ENCODE measurements at regions of chr3 and their contacts with region 1.

Region 1: DNA sequence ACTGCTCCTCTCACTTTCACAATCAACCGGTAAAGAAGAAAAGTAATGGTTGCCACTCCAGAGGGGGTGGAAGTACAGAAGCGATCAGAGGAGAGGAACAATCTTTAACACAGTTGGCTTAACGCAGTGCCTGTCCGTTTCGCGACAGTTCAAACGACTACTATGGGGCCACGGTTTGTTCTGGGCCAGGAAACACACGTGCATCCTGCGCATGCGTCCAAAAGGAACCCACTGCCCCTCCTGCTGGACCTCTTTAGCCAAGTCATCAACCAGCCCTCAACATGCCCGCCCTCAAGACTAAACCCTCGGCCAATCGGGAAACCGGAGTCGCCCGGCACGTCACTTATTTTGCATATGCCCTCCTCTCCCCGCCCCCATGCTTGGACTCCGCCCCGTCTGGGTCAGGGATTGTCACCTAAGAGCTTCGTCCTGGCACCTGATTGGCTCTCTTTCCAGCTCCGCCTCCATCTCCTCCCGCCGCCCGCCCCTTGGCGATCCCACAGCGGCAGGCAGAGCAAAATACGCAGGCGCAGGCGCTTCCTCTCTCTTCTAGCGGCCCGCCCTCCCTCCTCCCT is 345 bp upstream of the CDV3 start:
- ATAC-seq: peak; percentile 76 to 87 (median 82)
- H3K4me3 ChIP-seq: peak overlapping the region; percentile 43 to 89 (median 60)
- H3K27ac ChIP-seq: peak overlapping the region; percentile 93
- H3K4me1 ChIP-seq: peaks cover 7 to 10% of the 10 kb centered on the region in 2 donors

Region 2: DNA sequence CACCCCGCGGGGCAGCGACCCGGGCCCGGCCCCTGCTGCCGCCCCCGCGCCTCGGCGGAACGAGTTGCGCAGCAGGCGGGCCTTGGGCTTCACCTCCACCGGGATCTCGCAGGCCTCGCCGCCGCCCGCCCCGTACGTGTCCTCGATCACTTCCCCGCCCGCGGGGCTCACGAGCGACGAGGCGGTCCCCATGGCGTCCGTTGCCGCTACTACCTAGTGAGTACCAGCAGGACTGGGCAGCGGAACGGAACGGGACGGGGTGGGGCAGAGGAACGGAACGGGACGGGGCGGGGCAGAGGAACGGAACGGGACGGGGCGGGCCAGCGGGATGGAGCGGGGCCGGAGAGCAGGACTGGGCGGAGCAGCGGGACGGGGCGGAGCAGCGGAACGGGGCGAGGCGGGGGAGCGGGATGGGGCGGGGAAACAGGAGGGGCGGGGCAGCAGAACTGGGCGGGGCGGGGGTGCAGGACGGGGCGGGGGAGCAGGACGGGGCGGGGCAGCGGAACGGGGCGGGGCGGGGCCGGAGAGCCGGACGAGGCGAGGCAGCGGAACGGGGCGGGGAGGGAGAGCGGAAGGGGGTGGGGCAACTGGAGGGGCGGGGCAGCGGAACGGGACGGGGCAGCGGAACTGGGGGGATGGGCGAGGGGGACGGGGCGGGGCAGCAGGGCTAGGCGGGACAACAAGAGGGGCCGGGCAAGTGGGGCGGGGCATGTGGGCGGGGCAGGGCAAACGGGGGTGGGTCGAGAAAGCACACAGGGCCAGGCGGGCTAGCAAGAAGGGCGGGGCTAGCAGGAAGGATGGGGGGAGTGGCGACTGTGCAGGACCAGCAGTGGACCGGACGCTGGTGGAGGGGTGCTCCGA is 850.7 kb before region 1 on chr3 and contains the start of gene NPHP3:
- in situ Hi-C with region 1: loop called in 2 of 9 experiments (anchors 10 to 25 kb)
- ATAC-seq: peak; percentile 80 to 93 (median 90)
- H3K4me3 ChIP-seq: peak within 1 kb of the TSS; percentile 52 to 99 (median 97)
- H3K27ac ChIP-seq: peak within 1 kb of the TSS; percentile 76 to 89
- H3K4me1 ChIP-seq: peaks cover 14% of the 10 kb centered on the region in 2 donors
- total RNA-seq, gene NPHP3: 8.2 to 42.9 (median 16.7) TPM

Region 3: DNA sequence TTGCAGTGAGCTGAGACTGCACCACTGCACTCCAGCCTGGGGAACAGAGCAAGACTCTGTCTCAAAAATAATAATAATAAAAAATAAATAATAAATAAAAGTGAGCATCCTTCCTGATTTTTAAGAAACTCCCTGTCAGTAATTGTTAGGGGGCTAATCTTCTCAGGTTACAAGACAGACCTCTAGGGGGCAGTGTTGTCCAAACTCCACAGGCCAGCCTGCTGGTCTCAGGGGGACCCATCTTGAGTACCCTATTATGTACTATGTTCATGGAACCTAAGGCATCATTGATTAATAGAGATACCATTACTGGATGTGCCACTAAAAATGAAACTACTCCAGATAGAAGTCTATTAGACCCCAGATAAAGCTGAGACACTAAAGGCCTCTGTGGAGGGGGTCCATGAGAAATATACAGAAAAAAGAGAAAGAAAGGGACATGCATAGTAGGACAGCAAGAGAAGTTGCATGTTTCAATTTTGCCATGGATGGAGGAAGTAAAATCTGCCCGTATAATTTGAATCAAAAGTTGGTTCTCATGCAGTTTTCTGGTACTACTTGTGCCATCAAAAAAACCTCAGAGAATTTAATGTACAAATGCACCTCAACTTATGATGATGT is 85.1 kb before region 1 on chr3:
- in situ Hi-C with region 1: loop called in 1 of 9 experiments (anchors 10 kb)
- ATAC-seq: peak in 1 of 8 experiments; percentile 16
- H3K4me3 ChIP-seq: no peak overlapping the region
- H3K27ac ChIP-seq: no peak overlapping the region
- H3K4me1 ChIP-seq: no peaks in the 10 kb centered on the region